ENCODE measurements at regions of chrX and their contacts with region 1.

Region 1: GRCh38 chrX:51893931-51894696 is 691 bp downstream of the MAGED1 start:
- DNase-seq: peak in 1 of 2 experiments; percentile 7
- ATAC-seq: peak; percentile 32 to 39; a peak in 4 of 6 replicates
- H3K4me3 ChIP-seq: peak overlapping the region; percentile 67
- H3K27ac ChIP-seq: peak overlapping the region; percentile 81 to 97
- H3K4me1 ChIP-seq: no peaks in the 10 kb centered on the region
- CTCF ChIP-seq: no peak
- EP300 ChIP-seq: no peak
- POLR2A ChIP-seq: no peak
- RAD21 ChIP-seq: no peak

Region 2: DNA sequence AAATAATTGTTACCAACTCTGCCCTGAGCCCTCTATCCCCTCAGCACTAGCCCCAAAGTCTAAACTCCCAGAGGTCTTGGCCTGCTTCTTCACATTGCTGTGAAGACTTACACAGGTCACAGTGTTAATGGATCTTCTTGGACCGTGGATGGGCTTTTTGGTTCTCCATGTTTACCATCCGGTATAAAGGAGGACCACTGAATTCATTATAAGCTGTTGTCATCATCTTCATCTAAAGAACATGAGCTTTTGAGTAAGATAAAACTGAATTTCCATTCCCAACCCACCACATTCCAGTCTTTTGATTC is 406.2 kb before region 1 on chrX:
- CTCF ChIA-PET with region 1: interaction called, 7 read pairs
- POLR2A ChIA-PET with region 1: interaction called, 18 read pairs
- DNase-seq: no peak
- ATAC-seq: peak in 1 of 2 experiments; percentile 62; a peak in 3 of 6 replicates
- H3K4me3 ChIP-seq: no peak overlapping the region
- H3K27ac ChIP-seq: peak overlapping the region in 1 of 2 experiments; percentile 59; a peak in 2 of 6 replicates
- H3K4me1 ChIP-seq: no peaks in the 10 kb centered on the region
- CTCF ChIP-seq: no peak
- EP300 ChIP-seq: no peak
- POLR2A ChIP-seq: no peak
- RAD21 ChIP-seq: no peak

Region 3: GRCh38 chrX:51862920-51863319 is 31.2 kb before region 1 on chrX:
- CTCF ChIA-PET with region 1: no interaction called
- POLR2A ChIA-PET with region 1: no interaction called
- DNase-seq: no peak
- ATAC-seq: no peak
- H3K4me3 ChIP-seq: no peak overlapping the region
- H3K27ac ChIP-seq: no peak overlapping the region
- H3K4me1 ChIP-seq: no peaks in the 10 kb centered on the region
- CTCF ChIP-seq: no peak
- EP300 ChIP-seq: no peak
- POLR2A ChIP-seq: no peak
- RAD21 ChIP-seq: no peak

Measured in A549 (cell line).